Natural killer cell (primary cell): ENCODE measurements at regions of chr15 and their contacts with region 1.

Region 1: DNA sequence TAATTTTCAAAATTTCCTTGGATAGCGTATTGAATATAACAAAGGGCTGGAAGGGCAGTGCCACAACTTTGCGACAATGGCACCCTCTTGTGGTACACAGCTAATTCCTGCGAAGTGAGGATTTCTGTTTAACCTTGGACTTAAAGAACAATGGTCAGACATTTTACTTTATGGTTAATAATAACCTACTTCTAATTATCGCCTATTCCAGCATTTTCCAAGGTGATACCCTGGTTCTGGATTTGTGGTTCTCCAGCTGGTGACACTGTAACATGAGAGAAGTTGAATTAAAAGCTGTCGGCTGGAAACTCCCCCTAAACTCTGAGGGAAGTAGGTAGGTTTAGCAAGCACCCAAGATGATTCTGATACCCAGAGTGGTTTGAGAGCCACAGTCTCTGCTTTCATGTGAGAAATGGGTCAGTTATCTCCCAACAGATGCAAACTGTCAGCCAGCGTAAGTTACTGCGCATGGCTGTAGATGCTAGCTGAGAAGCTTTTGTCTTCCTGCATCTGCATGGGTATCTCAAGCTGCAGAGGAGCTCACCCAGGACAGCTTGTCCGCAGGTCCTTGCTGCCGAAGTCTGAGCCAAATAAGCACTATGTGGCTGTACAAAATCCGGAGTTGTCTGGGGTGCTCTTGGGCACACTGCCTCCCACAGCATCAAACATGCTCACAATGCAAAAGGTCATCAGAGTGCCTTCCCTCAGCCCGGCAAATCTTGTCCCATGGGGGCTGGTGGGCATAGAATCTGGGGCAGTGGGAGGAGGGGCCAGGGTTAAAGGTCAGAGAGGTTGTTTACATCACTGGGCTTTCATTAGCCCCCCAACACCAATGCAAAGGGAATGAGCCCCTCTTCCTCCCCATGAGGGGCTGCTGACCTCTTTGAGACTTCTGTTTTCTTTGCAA is 6.6 kb upstream of the CHSY1 start:
- DNase-seq: peak; percentile 38 to 84
- ATAC-seq: peak; percentile 78 to 86 (median 84)
- H3K4me3 ChIP-seq: no peak overlapping the region
- H3K4me3 Mint-ChIP-seq: no peak overlapping the region
- H3K27ac ChIP-seq: no peak overlapping the region
- H3K27ac Mint-ChIP-seq: no peak overlapping the region
- H3K4me1 ChIP-seq: peaks cover 2% of the 10 kb centered on the region
- H3K4me1 Mint-ChIP-seq: peaks cover 0 to 6% of the 10 kb centered on the region in 2 donors
- H3K27me3 ChIP-seq: no peaks in the 10 kb centered on the region
- H3K27me3 Mint-ChIP-seq: peaks cover 5 to 18% of the 10 kb centered on the region in 2 donors
- CTCF ChIP-seq: peak; percentile 92

Region 2: GRCh38 chr15:101014921-101015841 is 243.3 kb before region 1 on chr15:
- intact Hi-C with region 1: loop called (anchors 2 kb)
- DNase-seq: peak; percentile 47 to 79
- ATAC-seq: peak in 1 of 3 donors; percentile 51
- H3K4me3 ChIP-seq: no peak overlapping the region
- H3K4me3 Mint-ChIP-seq: no peak overlapping the region
- H3K27ac ChIP-seq: no peak overlapping the region
- H3K27ac Mint-ChIP-seq: no peak overlapping the region
- H3K4me1 ChIP-seq: no peaks in the 10 kb centered on the region
- H3K4me1 Mint-ChIP-seq: no peaks in the 10 kb centered on the region
- H3K27me3 ChIP-seq: no peaks in the 10 kb centered on the region
- H3K27me3 Mint-ChIP-seq: no peaks in the 10 kb centered on the region
- CTCF ChIP-seq: peak; percentile 56

Region 3: GRCh38 chr15:101413239-101413638 is 154.7 kb after region 1 on chr15:
- intact Hi-C with region 1: no loop called
- DNase-seq: no peak
- ATAC-seq: no peak
- H3K4me3 ChIP-seq: no peak overlapping the region
- H3K4me3 Mint-ChIP-seq: no peak overlapping the region
- H3K27ac ChIP-seq: no peak overlapping the region
- H3K27ac Mint-ChIP-seq: no peak overlapping the region
- H3K4me1 ChIP-seq: no peaks in the 10 kb centered on the region
- H3K4me1 Mint-ChIP-seq: no peaks in the 10 kb centered on the region
- H3K27me3 ChIP-seq: no peaks in the 10 kb centered on the region
- H3K27me3 Mint-ChIP-seq: peaks cover 5 to 18% of the 10 kb centered on the region in 2 donors
- CTCF ChIP-seq: no peak